ENCODE measurements at regions of chr6 and their contacts with region 1.

Region 1: GRCh38 chr6:167826230-167826895 is 348 bp upstream of the AFDN start:
- DNase-seq: no peak
- H3K4me3 ChIP-seq: peak overlapping the region; percentile 92 to 98 (median 97)
- H3K27ac ChIP-seq: peak overlapping the region; percentile 37
- H3K4me1 ChIP-seq: peaks cover 35% of the 10 kb centered on the region
- H3K27me3 ChIP-seq: no peaks in the 10 kb centered on the region
- CTCF ChIP-seq: peak; percentile 20 to 49
- POLR2A ChIP-seq: no peak

Region 2: DNA sequence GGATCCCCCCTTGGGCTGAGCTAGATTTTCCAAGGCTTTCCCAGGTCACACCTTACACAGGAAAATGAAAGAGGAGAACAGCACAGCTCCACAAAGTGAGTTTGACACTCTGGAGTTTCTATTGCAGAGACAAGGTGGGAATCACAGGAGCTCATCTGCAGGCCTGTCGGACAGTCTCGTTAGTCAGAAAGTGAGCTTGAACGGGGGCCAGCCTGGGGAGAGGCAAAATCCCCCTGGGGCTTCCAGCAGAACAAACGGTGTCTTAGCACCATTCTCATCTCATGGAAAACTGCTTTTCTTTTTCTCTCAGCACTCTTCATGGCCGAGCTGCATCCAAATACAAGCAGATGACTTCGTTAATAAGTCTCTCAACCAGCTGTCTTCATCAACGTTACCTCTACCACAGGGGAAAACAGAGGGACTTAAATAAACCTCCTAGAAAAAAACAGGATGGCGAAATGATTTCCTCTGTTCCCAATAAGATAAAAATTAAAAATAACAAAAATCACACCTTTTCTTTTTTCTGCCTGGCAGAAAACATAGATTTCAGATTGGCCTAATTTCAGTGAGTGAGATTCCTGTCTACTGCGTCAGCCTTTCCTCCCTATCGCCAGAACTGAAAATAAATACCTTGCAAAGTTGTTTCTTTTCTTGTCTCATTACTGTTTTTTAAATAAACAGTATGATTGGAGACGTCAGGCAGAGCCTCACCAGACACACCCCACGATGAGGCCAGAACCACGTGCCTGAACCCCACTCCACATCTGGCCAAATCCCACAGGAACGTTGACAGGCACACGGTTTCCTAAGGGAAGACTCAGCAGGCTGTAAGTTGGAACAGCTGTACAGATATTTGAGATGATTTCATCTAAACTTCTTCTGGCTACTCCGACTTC is 282.5 kb before region 1 on chr6:
- CTCF ChIA-PET with region 1: no interaction called
- POLR2A ChIA-PET with region 1: no interaction called
- dilution Hi-C with region 1: no loop called
- intact Hi-C with region 1: loop called (anchors 5 kb)
- DNase-seq: peak; percentile 62
- H3K4me3 ChIP-seq: peak overlapping the region in 1 of 3 experiments; percentile 5
- H3K27ac ChIP-seq: peak overlapping the region; percentile 89
- H3K4me1 ChIP-seq: peaks cover 25% of the 10 kb centered on the region
- H3K27me3 ChIP-seq: no peaks in the 10 kb centered on the region
- CTCF ChIP-seq: no peak
- POLR2A ChIP-seq: no peak

Region 3: DNA sequence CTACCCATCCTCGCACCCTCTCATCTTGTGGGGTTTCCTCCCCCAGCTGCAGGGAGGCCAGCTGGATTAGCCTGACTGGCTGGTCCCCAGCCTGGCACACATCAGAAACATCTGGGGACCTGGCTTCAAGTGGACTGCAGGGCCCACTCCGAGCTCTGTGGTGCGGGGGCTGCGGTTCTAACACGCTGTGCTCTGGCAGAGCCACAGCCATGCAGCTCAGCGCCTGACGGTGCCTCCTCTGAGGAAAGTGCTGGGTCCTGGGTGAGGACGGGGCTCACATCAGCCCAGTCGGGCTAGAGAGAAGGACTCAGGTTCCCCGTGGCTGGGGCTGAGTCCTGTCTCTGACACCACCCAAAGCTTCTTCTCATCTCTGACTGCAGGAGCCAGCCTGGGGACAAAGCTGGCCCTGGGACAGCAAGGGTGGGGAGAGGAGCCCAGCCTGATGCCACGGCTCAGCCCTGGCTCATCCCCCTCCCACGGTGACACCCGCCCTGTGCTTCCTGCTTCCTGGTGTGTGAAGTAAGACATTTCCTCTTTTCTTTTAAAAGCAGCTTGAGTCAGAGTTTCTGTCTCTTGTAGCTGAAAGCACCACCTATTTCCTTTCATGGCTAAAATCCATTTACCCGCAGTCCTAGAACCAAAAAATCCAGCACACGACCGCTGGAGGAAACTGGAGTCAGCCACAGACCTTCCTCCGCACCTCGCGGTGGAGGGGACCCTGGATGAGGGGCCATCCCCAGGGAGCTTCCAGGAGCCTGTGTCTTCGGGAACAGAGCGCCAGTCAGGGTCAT is 127.0 kb before region 1 on chr6:
- CTCF ChIA-PET with region 1: interaction called, 5 read pairs
- POLR2A ChIA-PET with region 1: no interaction called
- dilution Hi-C with region 1: no loop called
- intact Hi-C with region 1: loop called (anchors 5 kb)
- DNase-seq: peak; percentile 87
- H3K4me3 ChIP-seq: peak overlapping the region in 1 of 3 experiments; percentile 42
- H3K27ac ChIP-seq: peak overlapping the region; percentile 99
- H3K4me1 ChIP-seq: peaks cover 22% of the 10 kb centered on the region
- H3K27me3 ChIP-seq: no peaks in the 10 kb centered on the region
- CTCF ChIP-seq: no peak
- POLR2A ChIP-seq: no peak

Region 4: DNA sequence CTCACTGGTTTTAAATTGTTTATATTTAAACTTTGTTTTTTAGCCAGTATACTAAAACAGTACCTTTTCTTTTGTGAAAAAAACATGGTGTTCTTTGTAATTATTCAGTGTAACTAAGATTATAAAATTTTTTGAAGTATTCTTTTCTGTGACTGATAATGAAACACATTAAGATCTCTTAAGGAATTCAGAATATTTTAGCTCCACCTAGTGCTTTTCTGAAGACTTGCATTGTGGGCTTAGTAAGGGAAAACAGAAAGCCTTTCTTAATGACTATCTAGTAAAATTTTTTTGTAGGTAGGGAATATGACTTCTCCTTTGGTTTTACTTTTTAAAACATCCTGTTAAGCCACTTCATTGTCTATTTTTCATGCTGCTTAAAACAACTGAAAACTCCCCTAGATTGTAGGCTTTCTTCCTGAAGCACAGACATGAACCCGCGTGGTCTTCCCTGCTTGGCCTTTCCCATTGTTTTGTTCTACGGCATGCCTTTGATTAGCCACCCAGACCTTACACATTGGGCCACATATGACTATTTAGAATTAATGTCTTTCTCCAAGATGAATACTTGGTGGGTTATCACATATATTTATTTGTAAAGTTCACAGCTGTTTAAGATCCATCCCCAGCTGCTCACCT is 72.4 kb after region 1 on chr6:
- CTCF ChIA-PET with region 1: interaction called, 11 read pairs
- POLR2A ChIA-PET with region 1: no interaction called
- dilution Hi-C with region 1: no loop called
- intact Hi-C with region 1: loop called (anchors 1 kb)
- DNase-seq: peak; percentile 41
- H3K4me3 ChIP-seq: no peak overlapping the region
- H3K27ac ChIP-seq: no peak overlapping the region
- H3K4me1 ChIP-seq: no peaks in the 10 kb centered on the region
- H3K27me3 ChIP-seq: no peaks in the 10 kb centered on the region
- CTCF ChIP-seq: peak; percentile 44 to 52
- POLR2A ChIP-seq: no peak

Region 5: DNA sequence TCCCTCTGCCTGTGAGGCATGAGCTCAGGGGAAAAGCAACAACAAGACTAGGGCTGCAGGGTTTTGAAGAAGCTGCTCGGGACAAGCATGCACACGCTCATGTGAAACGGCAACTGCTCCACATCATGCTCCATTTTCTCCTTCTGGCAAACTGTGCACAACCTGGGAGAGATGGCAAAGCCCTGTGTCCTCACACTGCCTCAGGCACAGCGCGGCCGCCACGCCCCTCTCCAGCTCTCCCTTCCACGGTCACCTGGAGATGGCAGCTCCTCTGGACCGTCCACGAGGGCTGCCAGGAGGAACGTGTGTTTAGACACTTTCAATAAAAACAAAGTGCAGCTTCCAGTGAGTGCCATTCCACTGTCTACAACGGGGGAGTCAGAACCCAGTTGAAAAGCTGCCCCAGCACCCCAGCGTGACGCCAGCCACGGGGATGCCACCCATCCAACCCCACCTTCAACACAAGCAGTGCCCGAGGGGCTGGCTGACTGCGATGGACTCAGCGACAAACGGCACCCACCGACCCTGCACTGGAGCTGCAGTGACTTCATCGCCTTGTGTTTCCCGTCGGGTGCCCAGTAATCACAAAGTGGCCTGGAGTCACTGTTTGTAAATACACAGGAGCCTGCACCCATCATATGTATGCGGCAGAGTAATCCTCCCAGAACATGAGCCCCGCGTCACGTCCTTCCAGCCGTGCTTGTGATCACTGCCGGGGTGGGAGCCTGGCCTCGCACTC is 630.7 kb after region 1 on chr6:
- CTCF ChIA-PET with region 1: no interaction called
- POLR2A ChIA-PET with region 1: no interaction called
- dilution Hi-C with region 1: no loop called
- intact Hi-C with region 1: no loop called
- DNase-seq: no peak
- H3K4me3 ChIP-seq: no peak overlapping the region
- H3K27ac ChIP-seq: no peak overlapping the region
- H3K4me1 ChIP-seq: no peaks in the 10 kb centered on the region
- H3K27me3 ChIP-seq: no peaks in the 10 kb centered on the region
- CTCF ChIP-seq: no peak
- POLR2A ChIP-seq: no peak